ENCODE measurements at regions of chr10 and their contacts with region 1.

Region 1: DNA sequence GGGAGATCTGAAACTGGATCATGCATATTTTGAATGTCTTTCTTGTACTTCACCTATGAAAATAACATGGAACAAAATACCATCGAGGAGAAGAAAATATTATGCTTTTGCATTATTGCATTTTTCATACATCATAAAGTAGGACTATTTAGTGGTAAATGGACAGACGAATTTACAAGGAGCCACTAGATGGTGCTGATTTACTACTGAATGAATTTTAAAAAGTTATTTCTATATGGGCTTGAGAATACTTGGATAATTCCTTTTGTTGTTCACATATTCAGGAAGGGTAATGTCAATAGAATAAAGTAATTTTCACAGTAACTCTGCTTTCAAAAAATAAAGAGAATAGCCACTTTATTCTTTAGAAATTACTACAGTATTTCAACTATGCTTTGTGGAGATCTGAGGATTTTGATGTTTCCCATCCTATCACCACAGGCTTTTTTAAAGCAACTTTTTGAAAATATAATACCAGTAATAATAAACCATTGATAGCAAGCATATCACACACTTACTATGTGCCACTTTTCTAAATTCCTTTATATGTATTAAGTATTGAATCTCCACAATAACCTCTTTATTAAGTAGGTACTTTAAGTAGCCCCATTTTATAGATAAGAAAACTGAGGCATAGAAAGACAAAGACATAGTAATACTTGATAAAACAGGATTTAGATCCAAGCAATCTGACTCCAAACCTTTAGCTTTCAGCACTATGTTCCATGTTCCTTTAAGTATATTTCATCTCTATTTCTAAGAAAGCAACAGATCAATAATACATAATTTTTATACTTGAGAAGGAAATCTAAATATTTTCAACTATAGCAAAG is 38.6 kb downstream of the NEBL start:
- DNase-seq: no peak
- ATAC-seq: peak; percentile 49; the same call in 2 of the 3 replicates
- H3K4me3 ChIP-seq: no peak overlapping the region
- H3K27ac ChIP-seq: no peak overlapping the region
- H3K4me1 ChIP-seq: no peaks in the 10 kb centered on the region
- H3K27me3 ChIP-seq: no peaks in the 10 kb centered on the region
- CTCF ChIP-seq: peak in 2 of 3 experiments; percentile 29 to 50; a peak in 3 of 6 replicates
- EP300 ChIP-seq: no peak
- POLR2A ChIP-seq: no peak
- RAD21 ChIP-seq: peak; percentile 67

Region 2: DNA sequence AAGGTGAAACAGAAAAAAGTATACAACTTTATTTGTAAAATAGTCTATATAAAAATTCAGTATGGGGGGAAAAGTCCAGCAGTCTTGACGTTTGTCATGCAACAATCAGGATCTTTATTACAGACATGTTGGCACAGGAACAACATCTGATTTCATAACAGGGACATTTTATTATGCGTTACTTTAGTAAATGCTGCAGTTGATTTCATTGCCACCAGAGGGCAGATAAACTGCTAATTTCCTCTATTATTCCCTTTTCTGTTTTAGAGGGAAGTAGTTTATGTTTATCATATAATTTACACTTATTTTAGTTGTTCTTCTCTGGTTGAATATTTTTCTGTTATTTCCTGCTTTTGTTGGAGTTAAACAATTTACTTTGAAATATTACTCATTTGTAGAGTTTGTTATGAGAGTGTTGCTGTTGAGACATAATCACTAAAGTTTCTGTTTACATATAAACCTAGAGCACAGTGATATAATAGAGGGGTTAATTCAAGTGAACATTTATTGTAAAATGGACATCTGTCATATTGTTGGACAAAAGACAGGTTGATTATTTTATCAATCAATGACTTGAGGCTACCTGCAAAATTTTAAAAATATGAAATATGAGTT is 1039.0 kb before region 1 on chr10:
- CTCF ChIA-PET with region 1: no interaction called
- POLR2A ChIA-PET with region 1: no interaction called
- RAD21 ChIA-PET with region 1: interaction called, 3 read pairs
- SMC1A ChIA-PET with region 1: no interaction called
- in situ Hi-C with region 1: no loop called
- intact Hi-C with region 1: loop called (anchors 10 kb)
- DNase-seq: no peak
- ATAC-seq: peak; percentile 10; the same call in 1 of the 3 replicates
- H3K4me3 ChIP-seq: no peak overlapping the region
- H3K27ac ChIP-seq: no peak overlapping the region
- H3K4me1 ChIP-seq: no peaks in the 10 kb centered on the region
- H3K27me3 ChIP-seq: peaks cover 1 to 3% of the 10 kb centered on the region in 2 experiments; a peak in 3 of 4 replicates
- CTCF ChIP-seq: peak; percentile 46 to 72 (median 55); a peak in 5 of 6 replicates
- EP300 ChIP-seq: no peak
- POLR2A ChIP-seq: no peak
- RAD21 ChIP-seq: peak; percentile 62

Region 3: DNA sequence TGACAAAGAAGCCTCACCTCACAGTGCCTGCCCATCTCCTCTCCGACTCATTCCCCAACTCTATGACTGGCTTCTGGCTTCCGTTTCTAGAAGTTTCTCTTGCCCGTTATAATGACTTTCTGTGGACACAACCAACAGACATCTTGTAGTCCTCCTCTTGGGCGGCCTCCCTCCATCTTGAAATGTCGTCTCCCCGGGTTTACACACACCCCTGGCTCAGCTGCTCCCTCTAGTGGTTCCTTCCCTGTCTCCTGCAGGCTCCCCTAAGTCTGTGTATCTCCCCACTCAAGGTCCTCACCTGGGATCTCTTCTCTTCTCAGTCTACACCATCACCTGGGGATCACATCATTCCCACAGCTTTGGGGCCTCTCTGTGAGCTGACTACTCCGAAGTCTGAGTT is 162.0 kb after region 1 on chr10:
- CTCF ChIA-PET with region 1: interaction called, 11 read pairs
- POLR2A ChIA-PET with region 1: no interaction called
- RAD21 ChIA-PET with region 1: interaction called, 3 read pairs
- SMC1A ChIA-PET with region 1: interaction called, 5 read pairs
- in situ Hi-C with region 1: no loop called
- intact Hi-C with region 1: loop called (anchors 1 kb)
- DNase-seq: peak; percentile 21
- ATAC-seq: peak; percentile 99
- H3K4me3 ChIP-seq: no peak overlapping the region
- H3K27ac ChIP-seq: no peak overlapping the region
- H3K4me1 ChIP-seq: no peaks in the 10 kb centered on the region
- H3K27me3 ChIP-seq: no peaks in the 10 kb centered on the region
- CTCF ChIP-seq: peak; percentile 52 to 79 (median 75)
- EP300 ChIP-seq: no peak
- POLR2A ChIP-seq: no peak
- RAD21 ChIP-seq: peak; percentile 69

Region 4: DNA sequence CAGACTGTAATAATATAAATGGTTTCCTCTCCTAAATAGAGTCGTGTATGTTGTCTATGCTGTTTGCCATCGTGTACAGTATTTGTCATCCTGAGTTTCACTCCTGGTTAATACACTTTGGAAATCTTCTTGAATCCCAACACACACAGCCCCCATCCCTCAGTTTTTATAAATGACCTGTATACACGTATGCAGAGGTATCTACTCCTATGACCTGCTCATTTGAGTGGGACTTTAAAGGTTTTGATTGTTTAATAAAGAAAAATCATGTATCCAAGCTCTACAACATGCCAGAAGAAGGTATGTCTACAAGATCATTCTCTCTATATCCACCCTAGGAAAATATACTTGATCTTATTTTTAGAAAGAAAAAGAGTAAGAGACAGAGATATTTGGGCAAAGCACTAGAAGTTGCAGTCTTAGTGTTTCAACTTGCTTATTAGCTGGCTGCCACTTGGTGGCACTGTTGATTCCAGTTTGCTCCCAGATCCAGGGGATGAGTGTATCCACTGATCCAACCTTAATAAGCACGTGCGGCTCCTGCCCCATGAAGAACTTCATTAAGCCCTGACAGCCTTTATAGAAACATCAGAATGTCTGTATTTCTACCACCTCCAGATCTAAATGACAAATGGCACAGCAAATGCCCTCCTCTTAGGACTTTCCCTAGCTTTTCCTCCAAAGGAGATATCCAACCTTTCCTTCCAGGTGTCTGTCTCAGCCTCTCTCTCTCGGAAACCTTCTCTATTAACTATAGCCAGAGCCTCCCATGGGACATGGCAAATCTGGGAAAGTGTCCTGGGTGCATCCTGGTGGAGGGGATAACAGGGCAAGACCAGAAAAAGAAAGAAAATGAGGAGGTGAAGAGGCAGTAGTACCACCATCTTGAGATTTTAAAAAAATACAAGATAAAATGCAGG is 220.2 kb after region 1 on chr10:
- CTCF ChIA-PET with region 1: interaction called, 3 read pairs
- POLR2A ChIA-PET with region 1: no interaction called
- RAD21 ChIA-PET with region 1: no interaction called
- SMC1A ChIA-PET with region 1: interaction called, 3 read pairs
- in situ Hi-C with region 1: no loop called
- intact Hi-C with region 1: loop called (anchors 5 kb)
- DNase-seq: no peak
- ATAC-seq: peak; percentile 89
- H3K4me3 ChIP-seq: no peak overlapping the region
- H3K27ac ChIP-seq: no peak overlapping the region
- H3K4me1 ChIP-seq: no peaks in the 10 kb centered on the region
- H3K27me3 ChIP-seq: no peaks in the 10 kb centered on the region; a peak in 2 of 4 replicates
- CTCF ChIP-seq: peak; percentile 68 to 69 (median 69)
- EP300 ChIP-seq: no peak
- POLR2A ChIP-seq: no peak
- RAD21 ChIP-seq: peak; percentile 74

Region 5: GRCh38 chr10:21265621-21266020 is 407.1 kb after region 1 on chr10:
- CTCF ChIA-PET with region 1: no interaction called
- POLR2A ChIA-PET with region 1: no interaction called
- RAD21 ChIA-PET with region 1: no interaction called
- SMC1A ChIA-PET with region 1: no interaction called
- in situ Hi-C with region 1: loop called (anchors 25 kb)
- intact Hi-C with region 1: loop called (anchors 1 kb)
- DNase-seq: no peak
- ATAC-seq: no peak
- H3K4me3 ChIP-seq: no peak overlapping the region
- H3K27ac ChIP-seq: no peak overlapping the region
- H3K4me1 ChIP-seq: no peaks in the 10 kb centered on the region
- H3K27me3 ChIP-seq: no peaks in the 10 kb centered on the region
- CTCF ChIP-seq: no peak
- EP300 ChIP-seq: no peak
- POLR2A ChIP-seq: no peak
- RAD21 ChIP-seq: no peak

Region 6: GRCh38 chr10:21270976-21271375 is 412.5 kb after region 1 on chr10:
- CTCF ChIA-PET with region 1: no interaction called
- POLR2A ChIA-PET with region 1: no interaction called
- RAD21 ChIA-PET with region 1: no interaction called
- SMC1A ChIA-PET with region 1: no interaction called
- in situ Hi-C with region 1: loop called (anchors 25 kb)
- intact Hi-C with region 1: loop called (anchors 1 kb)
- DNase-seq: no peak
- ATAC-seq: no peak
- H3K4me3 ChIP-seq: no peak overlapping the region
- H3K27ac ChIP-seq: no peak overlapping the region
- H3K4me1 ChIP-seq: no peaks in the 10 kb centered on the region
- H3K27me3 ChIP-seq: 0 out of 4 replicates have a peak, but pooled peaks cover 0 to 2% of the 10 kb centered on the region in 2 experiments
- CTCF ChIP-seq: no peak
- EP300 ChIP-seq: no peak
- POLR2A ChIP-seq: no peak
- RAD21 ChIP-seq: no peak

Region 7: GRCh38 chr10:21300551-21300950 is 442.0 kb after region 1 on chr10:
- CTCF ChIA-PET with region 1: no interaction called
- POLR2A ChIA-PET with region 1: no interaction called
- RAD21 ChIA-PET with region 1: no interaction called
- SMC1A ChIA-PET with region 1: no interaction called
- in situ Hi-C with region 1: no loop called
- intact Hi-C with region 1: no loop called
- DNase-seq: no peak
- ATAC-seq: peak; percentile 61
- H3K4me3 ChIP-seq: no peak overlapping the region
- H3K27ac ChIP-seq: no peak overlapping the region
- H3K4me1 ChIP-seq: no peaks in the 10 kb centered on the region
- H3K27me3 ChIP-seq: no peaks in the 10 kb centered on the region
- CTCF ChIP-seq: no peak
- EP300 ChIP-seq: no peak
- POLR2A ChIP-seq: no peak
- RAD21 ChIP-seq: no peak

Region 8: GRCh38 chr10:21732067-21732772 is 873.7 kb after region 1 on chr10:
- CTCF ChIA-PET with region 1: no interaction called
- POLR2A ChIA-PET with region 1: no interaction called
- RAD21 ChIA-PET with region 1: no interaction called
- SMC1A ChIA-PET with region 1: no interaction called
- in situ Hi-C with region 1: loop called (anchors 25 kb)
- intact Hi-C with region 1: no loop called
- DNase-seq: no peak
- ATAC-seq: peak; percentile 82
- H3K4me3 ChIP-seq: no peak overlapping the region
- H3K27ac ChIP-seq: no peak overlapping the region
- H3K4me1 ChIP-seq: no peaks in the 10 kb centered on the region
- H3K27me3 ChIP-seq: no peaks in the 10 kb centered on the region
- CTCF ChIP-seq: peak; percentile 74 to 86 (median 79)
- EP300 ChIP-seq: no peak
- POLR2A ChIP-seq: no peak
- RAD21 ChIP-seq: peak; percentile 92

Measured in GM12878 (cell line).